CD8-positive, alpha-beta T cell (primary cell): ENCODE measurements at regions of chrX and their contacts with region 1.

Region 1: DNA sequence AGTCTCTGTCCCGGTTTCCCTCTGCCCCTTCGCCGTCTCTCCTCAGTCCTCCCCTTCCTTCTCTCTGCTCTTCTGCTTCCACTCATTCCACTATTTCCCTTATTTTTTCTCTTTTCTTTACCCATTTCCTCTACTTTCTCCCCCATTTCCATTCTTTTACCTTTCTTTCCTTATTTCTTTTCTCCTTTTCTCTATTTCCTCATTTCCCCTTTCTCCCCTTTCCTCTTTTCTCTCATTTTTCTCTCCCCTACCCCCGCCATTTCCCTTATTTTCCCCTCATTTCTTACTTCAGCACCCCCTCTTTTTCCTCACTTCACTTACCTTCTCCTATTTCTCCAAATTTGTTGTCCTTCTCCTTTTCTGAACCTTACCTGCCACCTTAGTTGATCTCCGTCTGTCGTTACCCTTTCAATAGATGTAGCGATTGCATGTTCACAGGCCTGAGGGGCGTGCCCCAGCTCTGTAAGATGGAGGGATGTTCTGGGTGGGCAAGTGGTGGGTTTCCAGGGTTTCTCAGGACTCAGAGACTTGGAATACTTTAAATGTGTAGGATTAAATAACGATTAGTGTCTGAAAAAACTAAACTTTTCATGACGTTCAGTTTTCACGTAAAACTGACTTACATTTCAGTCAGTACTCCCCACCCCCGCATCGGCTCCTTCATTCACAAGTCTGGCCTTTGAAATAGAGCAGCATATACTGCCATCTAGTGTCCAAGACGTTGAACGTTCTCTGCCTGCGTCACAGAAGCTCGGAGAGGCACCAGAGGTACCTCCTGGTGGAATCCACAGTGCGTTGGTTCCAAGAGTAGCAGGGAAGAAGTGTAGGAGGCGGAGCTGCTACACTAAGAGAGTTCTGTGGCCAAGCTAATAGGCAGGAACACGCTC is 641 bp upstream of the NCBP2L start:
- DNase-seq: peak; percentile 38 to 88 (median 77)
- ATAC-seq: peak; percentile 66
- H3K4me3 ChIP-seq: peak overlapping the region; percentile 63 to 70
- H3K4me3 Mint-ChIP-seq: peak overlapping the region; percentile 89
- H3K27ac ChIP-seq: peak overlapping the region; percentile 56 to 71
- H3K27ac Mint-ChIP-seq: peak overlapping the region; percentile 90
- H3K4me1 ChIP-seq: peaks cover 10% of the 10 kb centered on the region
- H3K4me1 Mint-ChIP-seq: peaks cover 24% of the 10 kb centered on the region
- H3K27me3 ChIP-seq: no peaks in the 10 kb centered on the region
- H3K27me3 Mint-ChIP-seq: no peaks in the 10 kb centered on the region
- CTCF ChIP-seq: peak; percentile 50

Region 2: GRCh38 chrX:106999002-106999975 is 777.6 kb before region 1 on chrX:
- CTCF ChIA-PET with region 1: no interaction called
- POLR2A ChIA-PET with region 1: no interaction called
- intact Hi-C with region 1: loop called in 1 of 2 experiments (anchors 1 kb)
- DNase-seq: peak in 8 of 9 experiments; percentile 7 to 64 (median 45)
- ATAC-seq: peak; percentile 61
- H3K4me3 ChIP-seq: peak overlapping the region; percentile 46 to 53
- H3K4me3 Mint-ChIP-seq: peak overlapping the region; percentile 83
- H3K27ac ChIP-seq: peak overlapping the region in 1 of 2 experiments; percentile 35
- H3K27ac Mint-ChIP-seq: peak overlapping the region; percentile 86
- H3K4me1 ChIP-seq: peaks cover 4% of the 10 kb centered on the region
- H3K4me1 Mint-ChIP-seq: peaks cover 11% of the 10 kb centered on the region
- H3K27me3 ChIP-seq: no peaks in the 10 kb centered on the region
- H3K27me3 Mint-ChIP-seq: peaks cover 3% of the 10 kb centered on the region
- CTCF ChIP-seq: no peak

Region 3: GRCh38 chrX:107205770-107206696 is 570.9 kb before region 1 on chrX and contains the starts of genes DNAAF6 and NUP62CL:
- CTCF ChIA-PET with region 1: no interaction called
- POLR2A ChIA-PET with region 1: no interaction called
- intact Hi-C with region 1: loop called in 1 of 2 experiments (anchors 2 kb)
- DNase-seq: peak; percentile 28 to 82 (median 63)
- ATAC-seq: peak; percentile 85
- H3K4me3 ChIP-seq: peak within 1 kb of the TSS; percentile 63 to 71
- H3K4me3 Mint-ChIP-seq: peak within 1 kb of the TSS; percentile 89
- H3K27ac ChIP-seq: peak within 1 kb of the TSS in 1 of 2 experiments; percentile 29
- H3K27ac Mint-ChIP-seq: no peak within 1 kb of the TSS
- H3K4me1 ChIP-seq: no peaks in the 10 kb centered on the region
- H3K4me1 Mint-ChIP-seq: peaks cover 6% of the 10 kb centered on the region
- H3K27me3 ChIP-seq: no peaks in the 10 kb centered on the region
- H3K27me3 Mint-ChIP-seq: peaks cover 4% of the 10 kb centered on the region
- CTCF ChIP-seq: no peak
- total RNA-seq, gene DNAAF6: not detected
- total RNA-seq, gene NUP62CL: 0.65 to 0.75 TPM

Region 4: GRCh38 chrX:107654872-107655761 is 121.8 kb before region 1 on chrX:
- CTCF ChIA-PET with region 1: interaction called, 201 read pairs
- POLR2A ChIA-PET with region 1: interaction called, 7 read pairs
- intact Hi-C with region 1: loop called (anchors 1 kb)
- DNase-seq: peak in 8 of 9 experiments; percentile 46 to 81 (median 69)
- ATAC-seq: peak; percentile 87
- H3K4me3 ChIP-seq: no peak overlapping the region
- H3K4me3 Mint-ChIP-seq: no peak overlapping the region
- H3K27ac ChIP-seq: no peak overlapping the region
- H3K27ac Mint-ChIP-seq: peak overlapping the region; percentile 57
- H3K4me1 ChIP-seq: peaks cover 11% of the 10 kb centered on the region
- H3K4me1 Mint-ChIP-seq: peaks cover 18% of the 10 kb centered on the region
- H3K27me3 ChIP-seq: peaks cover 0 to 2% of the 10 kb centered on the region in 2 experiments
- H3K27me3 Mint-ChIP-seq: no peaks in the 10 kb centered on the region
- CTCF ChIP-seq: peak; percentile 55

Region 5: DNA sequence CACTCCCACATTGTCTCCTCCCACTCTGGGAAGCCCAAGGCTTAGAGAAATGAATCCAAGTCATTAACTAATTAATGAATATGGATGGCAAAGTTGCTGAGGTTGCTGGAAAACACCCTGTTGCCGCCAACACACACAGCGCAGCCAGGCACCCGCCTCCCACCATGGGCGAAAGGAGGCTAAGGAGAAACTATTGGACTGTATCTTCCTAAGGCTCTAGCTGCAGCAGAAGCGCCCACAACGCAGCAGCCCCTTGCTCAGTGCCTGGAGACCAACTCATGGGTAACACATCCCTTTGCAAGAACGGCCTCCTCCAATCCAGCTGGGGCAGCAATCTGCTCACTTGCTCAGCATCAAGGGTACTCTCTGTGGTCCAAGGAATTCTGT is 35.5 kb before region 1 on chrX:
- CTCF ChIA-PET with region 1: interaction called, 43 read pairs
- POLR2A ChIA-PET with region 1: interaction called, 17 read pairs
- intact Hi-C with region 1: loop called (anchors 1 kb)
- DNase-seq: peak in 1 of 9 experiments; percentile 22
- ATAC-seq: peak; percentile 6
- H3K4me3 ChIP-seq: peak overlapping the region; percentile 29
- H3K4me3 Mint-ChIP-seq: peak overlapping the region; percentile 80
- H3K27ac ChIP-seq: peak overlapping the region; percentile 68 to 73
- H3K27ac Mint-ChIP-seq: peak overlapping the region; percentile 97
- H3K4me1 ChIP-seq: peaks cover 48% of the 10 kb centered on the region
- H3K4me1 Mint-ChIP-seq: peaks cover 44% of the 10 kb centered on the region
- H3K27me3 ChIP-seq: no peaks in the 10 kb centered on the region
- H3K27me3 Mint-ChIP-seq: no peaks in the 10 kb centered on the region
- CTCF ChIP-seq: no peak

Region 6: GRCh38 chrX:107894038-107894437 is 117.1 kb after region 1 on chrX:
- CTCF ChIA-PET with region 1: interaction called, 5 read pairs
- POLR2A ChIA-PET with region 1: no interaction called
- intact Hi-C with region 1: loop called (anchors 2 kb)
- DNase-seq: peak in 4 of 9 experiments; percentile 0 to 68 (median 46)
- ATAC-seq: peak; percentile 71
- H3K4me3 ChIP-seq: no peak overlapping the region
- H3K4me3 Mint-ChIP-seq: no peak overlapping the region
- H3K27ac ChIP-seq: no peak overlapping the region
- H3K27ac Mint-ChIP-seq: no peak overlapping the region
- H3K4me1 ChIP-seq: no peaks in the 10 kb centered on the region
- H3K4me1 Mint-ChIP-seq: no peaks in the 10 kb centered on the region
- H3K27me3 ChIP-seq: no peaks in the 10 kb centered on the region
- H3K27me3 Mint-ChIP-seq: no peaks in the 10 kb centered on the region
- CTCF ChIP-seq: peak; percentile 63

Region 7: GRCh38 chrX:108091266-108091877 is 314.5 kb after region 1 on chrX and contains the starts of genes ATG4A and PSMD10:
- CTCF ChIA-PET with region 1: no interaction called
- POLR2A ChIA-PET with region 1: no interaction called
- intact Hi-C with region 1: loop called in 1 of 2 experiments (anchors 5 kb)
- DNase-seq: peak; percentile 75 to 94 (median 87)
- ATAC-seq: peak; percentile 94
- H3K4me3 ChIP-seq: peak within 1 kb of the TSS; percentile 82 to 90
- H3K4me3 Mint-ChIP-seq: no peak within 1 kb of the TSS
- H3K27ac ChIP-seq: peak within 1 kb of the TSS; percentile 88 to 92
- H3K27ac Mint-ChIP-seq: no peak within 1 kb of the TSS
- H3K4me1 ChIP-seq: peaks cover 9% of the 10 kb centered on the region
- H3K4me1 Mint-ChIP-seq: peaks cover 24% of the 10 kb centered on the region
- H3K27me3 ChIP-seq: no peaks in the 10 kb centered on the region
- H3K27me3 Mint-ChIP-seq: no peaks in the 10 kb centered on the region
- CTCF ChIP-seq: no peak
- total RNA-seq, gene ATG4A: 3.7 to 6.3 TPM
- total RNA-seq, gene PSMD10: 22.6 to 23.5 TPM